ENCODE measurements at regions of chr13 and their contacts with region 1.

Region 1: GRCh38 chr13:79423801-79424642 is 18.0 kb upstream of the RBM26 start:
- DNase-seq: peak; percentile 25
- CTCF ChIP-seq: peak; percentile 62

Region 2: GRCh38 chr13:77975393-77976067 is 1448.5 kb before region 1 on chr13:
- CTCF ChIA-PET with region 1: no interaction called
- POLR2A ChIA-PET with region 1: no interaction called
- DNase-seq: no peak
- CTCF ChIP-seq: no peak

Region 3: GRCh38 chr13:79405829-79406596 is 18.0 kb before region 1 on chr13 and contains the start of gene RBM26:
- CTCF ChIA-PET with region 1: interaction called, 28 read pairs
- POLR2A ChIA-PET with region 1: no interaction called
- DNase-seq: peak; percentile 94
- CTCF ChIP-seq: no peak

Region 4: GRCh38 chr13:79434556-79434955 is 10.5 kb after region 1 on chr13:
- CTCF ChIA-PET with region 1: interaction called, 26 read pairs
- POLR2A ChIA-PET with region 1: no interaction called
- DNase-seq: no peak
- CTCF ChIP-seq: no peak

Region 5: GRCh38 chr13:79451500-79451962 is 27.5 kb after region 1 on chr13:
- CTCF ChIA-PET with region 1: interaction called, 13 read pairs
- POLR2A ChIA-PET with region 1: no interaction called
- DNase-seq: peak; percentile 74
- CTCF ChIP-seq: no peak

Region 6: DNA sequence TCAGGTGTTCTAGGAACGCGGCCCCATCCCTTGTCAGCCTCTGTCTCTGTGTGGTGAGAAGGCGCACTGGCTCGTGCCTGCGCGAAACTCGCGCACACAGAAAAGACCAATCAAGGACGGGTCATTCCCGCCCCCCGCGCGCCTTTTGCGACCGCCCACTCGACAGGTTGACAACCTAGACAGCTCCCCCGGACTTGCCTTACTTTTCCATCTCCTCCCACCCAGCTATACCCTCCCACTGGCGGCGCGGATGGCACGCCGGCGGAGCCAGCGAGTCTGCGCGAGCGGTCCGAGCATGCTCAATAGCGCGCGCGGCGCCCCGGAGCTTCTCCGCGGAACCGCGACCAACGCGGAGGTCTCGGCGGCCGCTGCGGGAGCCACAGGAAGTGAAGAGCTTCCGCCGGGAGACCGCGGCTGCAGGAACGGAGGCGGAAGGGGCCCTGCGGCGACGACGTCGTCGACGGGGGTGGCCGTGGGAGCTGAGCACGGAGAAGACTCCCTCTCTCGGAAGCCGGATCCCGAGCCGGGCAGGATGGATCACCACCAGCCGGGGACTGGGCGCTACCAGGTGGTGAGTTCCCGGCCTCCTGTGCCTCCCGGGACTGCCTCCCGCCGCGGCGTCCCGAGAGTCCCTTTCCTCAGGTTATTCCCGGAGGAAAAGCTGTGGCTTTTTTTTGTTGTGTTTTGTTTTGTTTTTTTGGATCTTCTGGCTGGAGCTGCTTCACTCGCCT is 57.1 kb after region 1 on chr13 and contains the start of gene NDFIP2:
- CTCF ChIA-PET with region 1: interaction called, 18 read pairs
- POLR2A ChIA-PET with region 1: no interaction called
- DNase-seq: peak; percentile 80
- CTCF ChIP-seq: no peak

Region 7: DNA sequence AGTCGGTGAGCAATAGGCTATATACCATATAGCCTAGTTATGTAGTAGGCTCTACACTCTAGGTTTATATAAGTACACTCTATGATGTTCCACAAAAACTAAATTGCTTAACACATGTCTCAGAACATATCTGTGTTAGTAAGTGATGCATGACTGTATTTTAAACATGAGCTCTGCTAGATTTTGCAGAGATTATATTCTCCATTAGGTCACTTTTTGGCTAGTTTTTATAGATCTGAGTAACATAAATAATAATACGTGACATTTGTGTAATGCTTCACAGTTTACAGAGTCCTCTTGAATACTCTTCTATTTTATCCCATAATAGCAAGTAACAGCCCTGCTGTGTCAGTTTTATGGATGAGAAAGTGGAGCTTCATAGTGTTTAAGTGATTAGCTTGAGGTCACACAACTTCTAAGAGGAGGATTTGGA is 104.8 kb after region 1 on chr13:
- CTCF ChIA-PET with region 1: interaction called, 52 read pairs
- POLR2A ChIA-PET with region 1: no interaction called
- DNase-seq: no peak
- CTCF ChIP-seq: no peak

Region 8: GRCh38 chr13:79541426-79542049 is 117.5 kb after region 1 on chr13:
- CTCF ChIA-PET with region 1: interaction called, 152 read pairs
- POLR2A ChIA-PET with region 1: no interaction called
- DNase-seq: peak; percentile 22
- CTCF ChIP-seq: peak; percentile 66

Region 9: DNA sequence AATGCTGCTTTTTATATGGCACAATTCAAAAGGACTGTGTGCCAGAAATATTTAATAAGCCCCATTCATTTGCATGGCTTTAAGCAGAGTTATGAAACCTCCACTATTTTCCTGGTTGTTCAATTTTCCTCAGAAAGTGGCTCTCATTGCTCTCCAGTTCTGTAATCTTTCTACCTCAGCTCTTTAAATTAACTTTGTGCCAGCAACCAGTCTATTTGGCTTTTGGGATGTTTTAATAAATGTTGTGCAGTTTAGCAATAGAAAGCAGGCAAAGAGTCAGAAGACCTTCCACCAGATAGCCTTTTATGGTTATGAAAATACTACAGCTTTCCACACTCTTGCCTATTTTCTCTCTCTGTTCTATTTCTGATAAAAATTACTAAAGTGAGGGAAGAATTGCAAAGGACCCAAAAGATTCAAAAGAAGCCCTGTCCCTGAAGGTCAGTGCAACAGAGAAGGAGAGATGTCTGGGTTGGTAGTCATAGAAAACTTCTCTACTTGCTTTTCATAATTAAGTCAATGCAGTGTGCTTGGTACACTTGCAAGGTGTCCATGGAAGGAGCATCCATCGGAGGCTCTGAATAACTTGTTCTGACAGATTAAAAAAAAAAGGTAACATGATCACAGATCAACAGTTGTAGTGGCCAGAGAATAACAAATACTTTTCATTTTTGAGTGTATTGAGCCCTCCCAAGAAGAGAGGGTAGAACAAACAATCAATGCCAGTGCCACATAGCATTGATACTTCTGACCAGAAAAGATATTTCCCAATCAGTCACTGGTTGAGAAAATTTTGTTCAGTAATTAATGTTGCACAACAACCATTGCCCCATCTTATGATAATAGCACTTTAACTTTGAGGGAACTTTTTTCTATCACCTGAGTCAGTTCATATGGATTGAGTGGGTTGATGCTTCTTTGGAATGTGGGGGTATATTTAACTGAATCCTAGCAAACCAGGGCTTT is 965.3 kb after region 1 on chr13:
- CTCF ChIA-PET with region 1: no interaction called
- POLR2A ChIA-PET with region 1: no interaction called
- DNase-seq: no peak
- CTCF ChIP-seq: no peak

Measured in GM10248 (cell line).